Activated CD4-positive, alpha-beta memory T cell treated with anti-CD3 and anti-CD28 coated beads for 36 hours (primary cell): ENCODE measurements at regions of chr11 and their contacts with region 1.

Region 1: GRCh38 chr11:59186130-59186594 is 14.2 kb downstream of the DTX4 start:
- DNase-seq: peak; percentile 70
- H3K4me3 Mint-ChIP-seq: no peak overlapping the region
- H3K27ac Mint-ChIP-seq: no peak overlapping the region
- H3K4me1 Mint-ChIP-seq: peaks cover 2% of the 10 kb centered on the region
- H3K27me3 Mint-ChIP-seq: no peaks in the 10 kb centered on the region

Region 2: GRCh38 chr11:58958500-58958899 is 227.7 kb before region 1 on chr11:
- CTCF ChIA-PET with region 1: no interaction called
- POLR2A ChIA-PET with region 1: no interaction called
- intact Hi-C with region 1: no loop called
- DNase-seq: peak; percentile 53
- H3K4me3 Mint-ChIP-seq: no peak overlapping the region
- H3K27ac Mint-ChIP-seq: no peak overlapping the region
- H3K4me1 Mint-ChIP-seq: peaks cover 3% of the 10 kb centered on the region
- H3K27me3 Mint-ChIP-seq: peaks cover 6% of the 10 kb centered on the region

Region 3: DNA sequence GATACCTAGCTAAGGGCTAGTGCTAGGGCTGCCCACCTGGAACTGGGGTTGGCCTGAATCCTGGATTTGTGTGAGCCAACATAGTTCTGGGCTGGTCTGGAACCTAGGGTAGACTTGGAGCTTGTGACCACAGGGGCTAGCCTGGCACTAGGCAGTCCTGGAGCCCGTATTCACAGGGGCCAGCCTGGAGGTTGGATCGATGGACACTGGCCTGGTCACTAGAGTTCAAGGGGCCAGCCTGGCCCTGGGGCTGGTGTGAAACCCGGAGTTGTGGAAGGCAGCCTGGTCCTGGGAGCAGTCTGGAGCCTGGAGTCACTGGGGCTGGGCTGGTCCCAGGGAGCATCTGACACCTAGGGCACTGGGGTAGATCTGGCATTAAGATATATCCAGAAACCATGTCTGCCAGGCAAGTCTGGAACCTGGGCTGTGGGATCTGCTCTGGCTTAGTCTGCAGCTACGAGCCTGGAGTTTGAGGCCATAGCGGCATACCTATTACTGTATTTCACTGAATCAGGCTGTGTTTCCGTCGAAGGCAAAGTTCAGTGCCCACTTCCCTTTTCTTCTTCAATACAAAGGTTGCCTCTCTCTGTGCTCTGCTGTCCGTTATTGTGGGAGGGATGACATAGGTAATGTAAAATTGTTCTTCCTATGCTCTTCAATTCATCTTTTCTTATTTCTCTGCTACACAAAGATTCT is 109.1 kb before region 1 on chr11:
- CTCF ChIA-PET with region 1: no interaction called
- POLR2A ChIA-PET with region 1: no interaction called
- intact Hi-C with region 1: no loop called
- DNase-seq: no peak
- H3K4me3 Mint-ChIP-seq: no peak overlapping the region
- H3K27ac Mint-ChIP-seq: no peak overlapping the region
- H3K4me1 Mint-ChIP-seq: no peaks in the 10 kb centered on the region
- H3K27me3 Mint-ChIP-seq: peaks cover 25% of the 10 kb centered on the region

Region 4: DNA sequence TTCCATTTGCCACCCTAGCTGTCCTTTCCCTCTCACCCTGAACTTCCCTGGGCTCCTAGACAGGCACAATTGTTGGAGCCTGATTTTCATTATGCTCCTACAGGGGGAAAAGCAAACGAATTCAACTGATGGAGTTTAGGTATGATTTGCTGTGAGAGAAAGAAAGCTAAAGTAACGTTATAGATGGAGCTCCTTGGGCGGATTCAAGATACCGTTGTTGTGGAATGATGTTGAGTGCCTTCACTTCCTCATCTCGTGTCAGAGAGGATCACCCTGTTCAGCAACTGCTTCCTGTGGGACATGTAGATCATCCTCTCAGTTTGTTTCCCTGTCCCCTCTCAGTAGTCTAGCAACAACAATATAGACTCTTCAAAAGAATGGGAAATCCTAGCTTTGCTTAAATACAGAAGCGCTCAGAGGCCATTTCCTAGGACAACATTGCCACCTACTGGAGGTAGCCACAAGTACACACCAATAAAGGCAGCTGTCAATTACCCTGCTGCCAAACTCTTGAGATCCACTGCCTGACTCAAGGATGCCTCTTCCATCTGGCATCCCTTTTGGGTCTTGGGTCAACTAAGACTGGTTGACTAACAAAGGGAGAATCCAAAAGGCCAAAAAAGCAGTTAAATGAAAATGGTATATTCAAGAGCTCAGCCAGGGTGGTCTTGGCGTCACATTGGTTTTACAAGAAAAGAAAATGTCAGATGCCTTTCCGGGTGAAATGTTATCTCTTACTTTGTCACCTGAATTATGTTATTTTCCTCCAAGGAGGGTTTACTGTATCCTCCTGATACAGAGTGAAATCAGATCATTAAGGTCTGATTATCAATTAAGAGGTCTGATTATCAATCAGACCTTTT is 27.7 kb before region 1 on chr11:
- CTCF ChIA-PET with region 1: interaction called, 20 read pairs
- POLR2A ChIA-PET with region 1: no interaction called
- intact Hi-C with region 1: no loop called
- DNase-seq: peak; percentile 68
- H3K4me3 Mint-ChIP-seq: no peak overlapping the region
- H3K27ac Mint-ChIP-seq: no peak overlapping the region
- H3K4me1 Mint-ChIP-seq: peaks cover 4% of the 10 kb centered on the region
- H3K27me3 Mint-ChIP-seq: peaks cover 13% of the 10 kb centered on the region

Region 5: DNA sequence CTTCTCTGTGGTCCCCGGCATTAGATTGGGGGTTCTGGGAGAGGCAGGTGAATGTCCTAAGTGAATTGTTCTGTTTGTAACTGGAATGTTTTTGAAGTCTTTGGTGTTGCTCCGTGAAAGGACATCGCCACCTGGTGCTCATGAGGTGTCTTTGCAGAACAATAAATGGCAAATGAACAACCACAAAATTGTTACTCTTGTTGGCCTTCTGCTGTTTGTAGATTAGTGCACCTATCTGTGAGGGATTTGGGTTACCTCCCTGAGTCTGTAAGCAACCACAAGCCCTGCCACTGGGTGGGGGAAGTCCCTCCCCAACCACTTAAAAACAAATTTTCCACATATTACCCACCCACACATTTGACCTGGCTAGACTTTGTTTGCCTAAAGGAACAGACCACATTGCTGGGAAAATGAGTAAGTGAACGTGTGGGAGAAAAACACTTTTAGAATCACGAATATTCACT is 21.9 kb after region 1 on chr11:
- CTCF ChIA-PET with region 1: interaction called, 27 read pairs
- POLR2A ChIA-PET with region 1: no interaction called
- intact Hi-C with region 1: no loop called
- DNase-seq: peak; percentile 44
- H3K4me3 Mint-ChIP-seq: no peak overlapping the region
- H3K27ac Mint-ChIP-seq: no peak overlapping the region
- H3K4me1 Mint-ChIP-seq: peaks cover 32% of the 10 kb centered on the region
- H3K27me3 Mint-ChIP-seq: peaks cover 13% of the 10 kb centered on the region

Region 6: DNA sequence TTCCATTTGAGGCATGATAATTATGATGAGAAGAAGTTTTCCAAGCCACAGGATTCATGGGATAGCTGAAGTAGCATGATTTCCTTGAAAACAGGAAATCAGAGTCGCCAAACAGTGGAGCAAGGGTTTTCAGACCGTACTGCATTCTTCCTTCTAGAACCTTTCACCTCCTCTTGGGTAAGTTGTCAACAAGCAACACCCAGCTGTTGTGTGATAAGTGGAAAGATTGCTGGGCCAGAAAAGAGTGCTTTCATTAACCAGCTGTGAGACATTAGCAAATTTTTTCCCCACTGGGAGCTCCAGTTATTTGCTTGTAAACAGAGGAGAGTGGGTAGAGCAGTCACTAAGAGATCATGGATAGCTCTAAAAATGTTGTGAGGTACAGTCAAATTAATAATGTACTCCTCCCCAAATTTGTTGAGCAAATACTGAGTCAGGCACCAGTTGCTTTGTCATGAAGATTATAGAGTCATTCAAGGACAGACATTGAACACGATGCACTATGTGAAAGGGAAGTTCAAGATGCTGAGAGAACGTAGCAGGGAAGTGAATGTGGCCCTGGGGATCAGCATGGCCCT is 38.3 kb after region 1 on chr11:
- CTCF ChIA-PET with region 1: interaction called, 12 read pairs
- POLR2A ChIA-PET with region 1: no interaction called
- intact Hi-C with region 1: no loop called
- DNase-seq: no peak
- H3K4me3 Mint-ChIP-seq: no peak overlapping the region
- H3K27ac Mint-ChIP-seq: no peak overlapping the region
- H3K4me1 Mint-ChIP-seq: peaks cover 6% of the 10 kb centered on the region
- H3K27me3 Mint-ChIP-seq: peaks cover 3% of the 10 kb centered on the region

Region 7: DNA sequence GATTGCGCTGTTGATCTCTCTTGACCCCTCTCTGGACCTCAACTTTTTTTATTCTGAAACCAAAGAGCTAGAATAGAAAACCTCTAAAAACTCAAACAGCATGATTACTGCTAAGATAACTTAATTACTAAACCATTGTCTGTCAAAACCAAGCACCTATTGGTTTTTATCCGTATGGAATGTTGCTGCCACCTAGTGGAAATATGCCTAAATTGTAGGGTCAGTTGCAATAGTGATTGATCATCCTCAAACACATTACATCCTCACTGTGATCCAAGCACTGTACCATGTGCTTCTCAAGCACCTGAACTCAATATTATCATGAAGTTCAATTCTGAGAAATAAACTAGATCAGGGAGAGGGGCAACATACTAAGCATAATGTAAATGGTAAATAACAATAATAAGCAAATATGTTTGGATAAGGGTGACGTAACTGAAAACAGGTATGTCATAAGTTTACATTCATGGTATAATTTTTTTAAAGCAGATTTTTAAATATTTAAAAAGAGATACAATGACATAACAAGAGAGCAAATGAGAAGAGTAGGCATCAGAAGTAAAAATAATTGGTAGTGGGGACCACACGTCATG is 243.9 kb after region 1 on chr11:
- CTCF ChIA-PET with region 1: interaction called, 11 read pairs
- POLR2A ChIA-PET with region 1: no interaction called
- intact Hi-C with region 1: no loop called
- DNase-seq: no peak
- H3K4me3 Mint-ChIP-seq: no peak overlapping the region
- H3K27ac Mint-ChIP-seq: no peak overlapping the region
- H3K4me1 Mint-ChIP-seq: no peaks in the 10 kb centered on the region
- H3K27me3 Mint-ChIP-seq: peaks cover 1% of the 10 kb centered on the region